AG04449 (cell line): ENCODE measurements at regions of chr13 and their contacts with region 1.

Region 1: DNA sequence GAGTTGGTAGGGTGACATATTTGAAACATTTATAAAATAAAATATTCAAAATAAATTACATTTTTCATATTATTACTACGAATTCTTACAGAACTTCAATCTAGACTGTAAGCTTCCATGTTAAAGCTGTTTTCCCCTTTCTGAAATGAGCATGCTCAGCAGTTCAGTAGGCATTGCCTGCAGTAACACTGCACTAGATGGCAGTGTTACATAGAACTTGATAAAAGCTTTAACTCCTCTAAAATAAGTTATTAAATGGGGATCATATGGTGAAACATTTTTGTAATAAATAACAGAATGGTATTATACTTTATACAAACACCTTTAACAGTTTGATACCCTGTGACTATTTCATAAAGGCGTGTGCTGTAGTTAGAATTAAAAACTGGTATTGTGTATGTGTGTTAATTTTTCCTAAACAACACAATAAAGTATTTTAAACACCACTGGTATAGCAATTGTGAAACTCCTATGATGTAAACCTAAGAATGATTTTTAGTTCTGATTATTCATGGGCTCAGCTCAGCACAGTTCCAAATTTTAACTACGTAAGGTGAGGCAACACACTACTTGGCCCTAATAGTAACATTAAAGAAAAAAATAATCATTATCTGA is 11.6 kb upstream of the GPR18 start:
- DNase-seq: no peak
- H3K4me3 ChIP-seq: no peak overlapping the region
- CTCF ChIP-seq: peak; percentile 69

Region 2: GRCh38 chr13:99200432-99201167 is 69.1 kb before region 1 on chr13 and contains the start of gene UBAC2:
- CTCF ChIA-PET with region 1: interaction called, 85 read pairs
- POLR2A ChIA-PET with region 1: interaction called, 3 read pairs
- DNase-seq: peak; percentile 45
- H3K4me3 ChIP-seq: peak within 1 kb of the TSS; percentile 98
- CTCF ChIP-seq: no peak

Region 3: GRCh38 chr13:99281811-99282263 is 12.1 kb after region 1 on chr13:
- CTCF ChIA-PET with region 1: interaction called, 34 read pairs
- POLR2A ChIA-PET with region 1: no interaction called
- DNase-seq: no peak
- H3K4me3 ChIP-seq: no peak overlapping the region
- CTCF ChIP-seq: no peak

Region 4: GRCh38 chr13:99380921-99381645 is 111.3 kb after region 1 on chr13:
- CTCF ChIA-PET with region 1: interaction called, 12 read pairs
- POLR2A ChIA-PET with region 1: no interaction called
- DNase-seq: no peak
- H3K4me3 ChIP-seq: no peak overlapping the region
- CTCF ChIP-seq: no peak

Region 5: GRCh38 chr13:99442273-99442895 is 172.7 kb after region 1 on chr13:
- CTCF ChIA-PET with region 1: interaction called, 1,002 read pairs
- POLR2A ChIA-PET with region 1: no interaction called
- DNase-seq: no peak
- H3K4me3 ChIP-seq: no peak overlapping the region
- CTCF ChIP-seq: peak; percentile 80